ENCODE measurements at regions of chr19 and their contacts with region 1.

Region 1: GRCh38 chr19:58228585-58229254 is at the start of gene ZNF544:
- DNase-seq: no peak

Region 2: DNA sequence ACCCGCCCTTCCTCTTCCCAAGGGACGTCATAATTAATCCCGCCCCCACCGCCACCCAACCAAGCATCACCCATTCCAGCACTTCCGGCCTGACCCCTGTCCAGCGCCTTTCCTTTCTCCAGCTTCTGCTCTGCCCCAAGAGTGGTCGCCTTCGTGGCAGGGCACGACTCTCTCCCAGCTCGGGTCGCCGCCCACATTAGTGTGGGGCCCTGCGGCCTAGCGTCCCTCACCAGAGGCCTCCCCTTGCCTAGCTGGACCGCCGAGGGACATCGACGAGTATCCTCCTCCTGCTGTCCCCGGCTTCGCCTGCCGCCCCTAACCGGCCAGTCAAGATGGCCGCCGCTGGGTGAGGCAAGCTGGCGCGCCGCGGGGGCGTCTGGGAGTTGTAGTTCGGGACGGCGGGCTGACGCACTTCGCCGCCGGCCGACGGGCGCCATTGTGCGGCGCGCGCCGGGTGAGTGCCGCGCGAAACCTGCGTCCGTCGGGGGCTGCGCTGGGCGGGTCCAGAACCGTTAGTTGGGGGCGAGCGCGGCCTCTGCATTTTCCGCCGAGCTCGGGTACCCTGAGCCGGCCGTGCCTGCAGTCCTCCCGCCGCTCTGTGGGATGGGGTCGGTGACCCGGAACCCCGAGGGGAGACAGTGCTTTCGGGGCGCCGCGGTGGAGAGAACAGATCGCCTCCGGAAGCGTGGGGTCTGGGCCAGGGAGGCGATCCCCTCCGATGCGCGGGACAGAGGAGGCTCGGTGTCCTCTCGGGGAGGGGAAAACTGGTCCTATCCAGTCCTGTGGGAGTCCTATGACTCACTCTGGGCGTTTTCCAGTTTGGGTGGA is 45.5 kb before region 1 on chr19 and contains the start of gene ZNF274:
- CTCF ChIA-PET with region 1: no interaction called
- POLR2A ChIA-PET with region 1: interaction called, 10 read pairs
- DNase-seq: peak; percentile 93

Region 3: GRCh38 chr19:58248886-58249285 is 20.2 kb after region 1 on chr19:
- CTCF ChIA-PET with region 1: no interaction called
- POLR2A ChIA-PET with region 1: no interaction called
- DNase-seq: no peak

Measured in HEK293T (cell line).